Common myeloid progenitor, CD34-positive (primary cell): ENCODE measurements at regions of chr10 and their contacts with region 1.

Region 1: GRCh38 chr10:110600487-110601101 is 33.1 kb downstream of the SMC3 start:
- DNase-seq: peak; percentile 79 to 89 (median 84)
- H3K4me3 ChIP-seq: no peak overlapping the region
- H3K27ac ChIP-seq: no peak overlapping the region
- H3K4me1 ChIP-seq: peaks cover 0 to 5% (median 0%) of the 10 kb centered on the region in 4 experiments
- H3K27me3 ChIP-seq: no peaks in the 10 kb centered on the region

Region 2: GRCh38 chr10:110304780-110305421 is 295.7 kb before region 1 on chr10 and contains the start of gene SMNDC1:
- CTCF ChIA-PET with region 1: interaction called, 84 read pairs
- POLR2A ChIA-PET with region 1: no interaction called
- DNase-seq: peak; percentile 97 to 98 (median 98)
- H3K4me3 ChIP-seq: peak within 1 kb of the TSS; percentile 89 to 98 (median 93)
- H3K27ac ChIP-seq: peak within 1 kb of the TSS; percentile 89 to 94
- H3K4me1 ChIP-seq: peaks cover 17 to 38% (median 26%) of the 10 kb centered on the region in 4 experiments
- H3K27me3 ChIP-seq: no peaks in the 10 kb centered on the region